Caco-2 (cell line): ENCODE measurements at regions of chr6 and their contacts with region 1.

Region 1: GRCh38 chr6:75183099-75183541 is 22.7 kb downstream of the COL12A1 start:
- DNase-seq: peak; percentile 81
- H3K4me3 ChIP-seq: no peak overlapping the region
- H3K4me3 Mint-ChIP-seq: peak overlapping the region; percentile 66
- H3K27ac Mint-ChIP-seq: peak overlapping the region; percentile 80
- H3K4me1 ChIP-seq: peaks cover 32% of the 10 kb centered on the region
- H3K4me1 Mint-ChIP-seq: peaks cover 31% of the 10 kb centered on the region
- H3K27me3 ChIP-seq: no peaks in the 10 kb centered on the region
- H3K27me3 Mint-ChIP-seq: no peaks in the 10 kb centered on the region
- CTCF ChIP-seq: no peak

Region 2: GRCh38 chr6:74971633-74972032 is 211.5 kb before region 1 on chr6:
- CTCF ChIA-PET with region 1: no interaction called
- POLR2A ChIA-PET with region 1: no interaction called
- intact Hi-C with region 1: loop called (anchors 2 kb)
- DNase-seq: no peak
- H3K4me3 ChIP-seq: no peak overlapping the region
- H3K4me3 Mint-ChIP-seq: no peak overlapping the region
- H3K27ac Mint-ChIP-seq: no peak overlapping the region
- H3K4me1 ChIP-seq: peaks cover 36% of the 10 kb centered on the region
- H3K4me1 Mint-ChIP-seq: peaks cover 17% of the 10 kb centered on the region
- H3K27me3 ChIP-seq: no peaks in the 10 kb centered on the region
- H3K27me3 Mint-ChIP-seq: no peaks in the 10 kb centered on the region
- CTCF ChIP-seq: no peak

Region 3: GRCh38 chr6:75052491-75052890 is 130.6 kb before region 1 on chr6:
- CTCF ChIA-PET with region 1: no interaction called
- POLR2A ChIA-PET with region 1: no interaction called
- intact Hi-C with region 1: no loop called
- DNase-seq: no peak
- H3K4me3 ChIP-seq: no peak overlapping the region
- H3K4me3 Mint-ChIP-seq: no peak overlapping the region
- H3K27ac Mint-ChIP-seq: no peak overlapping the region
- H3K4me1 ChIP-seq: no peaks in the 10 kb centered on the region
- H3K4me1 Mint-ChIP-seq: no peaks in the 10 kb centered on the region
- H3K27me3 ChIP-seq: no peaks in the 10 kb centered on the region
- H3K27me3 Mint-ChIP-seq: no peaks in the 10 kb centered on the region
- CTCF ChIP-seq: no peak

Region 4: GRCh38 chr6:75101896-75102295 is 81.2 kb before region 1 on chr6:
- CTCF ChIA-PET with region 1: no interaction called
- POLR2A ChIA-PET with region 1: no interaction called
- intact Hi-C with region 1: loop called (anchors 1 kb)
- DNase-seq: no peak
- H3K4me3 ChIP-seq: no peak overlapping the region
- H3K4me3 Mint-ChIP-seq: no peak overlapping the region
- H3K27ac Mint-ChIP-seq: no peak overlapping the region
- H3K4me1 ChIP-seq: peaks cover 24% of the 10 kb centered on the region
- H3K4me1 Mint-ChIP-seq: peaks cover 31% of the 10 kb centered on the region
- H3K27me3 ChIP-seq: no peaks in the 10 kb centered on the region
- H3K27me3 Mint-ChIP-seq: no peaks in the 10 kb centered on the region
- CTCF ChIP-seq: no peak

Region 5: DNA sequence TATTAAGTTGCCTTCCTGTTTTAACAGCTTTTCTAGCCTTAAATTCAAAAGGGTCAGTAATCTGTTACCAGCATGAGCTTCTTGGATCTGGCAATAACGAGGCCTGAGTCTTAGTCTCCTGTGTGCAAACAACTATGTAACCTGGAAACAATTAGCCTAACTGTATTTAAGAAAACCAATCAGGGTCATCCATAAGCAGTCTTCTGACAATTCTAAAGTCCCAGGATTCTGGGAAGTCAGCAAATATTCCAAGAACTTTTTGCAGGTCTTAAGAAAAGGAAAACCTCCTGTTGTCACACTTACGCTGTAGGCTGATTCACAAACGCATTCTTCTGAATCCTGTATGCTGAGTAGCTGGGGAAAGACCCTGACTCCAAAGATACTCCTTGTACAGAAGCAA is 67.6 kb before region 1 on chr6:
- CTCF ChIA-PET with region 1: no interaction called
- POLR2A ChIA-PET with region 1: no interaction called
- intact Hi-C with region 1: loop called (anchors 5 kb)
- DNase-seq: no peak
- H3K4me3 ChIP-seq: no peak overlapping the region
- H3K4me3 Mint-ChIP-seq: no peak overlapping the region
- H3K27ac Mint-ChIP-seq: no peak overlapping the region
- H3K4me1 ChIP-seq: peaks cover 24% of the 10 kb centered on the region
- H3K4me1 Mint-ChIP-seq: peaks cover 35% of the 10 kb centered on the region
- H3K27me3 ChIP-seq: no peaks in the 10 kb centered on the region
- H3K27me3 Mint-ChIP-seq: no peaks in the 10 kb centered on the region
- CTCF ChIP-seq: no peak

Region 6: DNA sequence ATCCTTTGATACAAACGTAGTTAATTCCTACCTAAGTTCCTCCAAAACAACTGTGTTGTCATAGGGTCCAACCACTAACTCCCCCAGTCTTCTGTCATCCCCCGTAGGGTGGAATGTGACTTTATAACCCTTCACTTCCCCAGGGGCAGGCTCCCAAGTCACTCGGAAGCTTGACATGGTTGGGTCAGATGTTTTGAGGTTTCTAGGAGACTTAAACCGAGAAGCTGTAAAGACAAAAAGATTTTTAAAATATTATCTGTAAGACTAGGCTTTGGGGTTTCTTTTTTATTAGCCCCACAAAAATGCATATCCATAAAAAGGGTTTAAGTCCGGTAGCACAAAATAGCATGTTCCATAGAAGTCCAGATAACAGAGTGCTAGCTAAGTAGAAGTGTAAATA is 27.5 kb before region 1 on chr6:
- CTCF ChIA-PET with region 1: no interaction called
- POLR2A ChIA-PET with region 1: no interaction called
- intact Hi-C with region 1: loop called (anchors 2 kb)
- DNase-seq: no peak
- H3K4me3 ChIP-seq: no peak overlapping the region
- H3K4me3 Mint-ChIP-seq: no peak overlapping the region
- H3K27ac Mint-ChIP-seq: peak overlapping the region; percentile 42
- H3K4me1 ChIP-seq: peaks cover 21% of the 10 kb centered on the region
- H3K4me1 Mint-ChIP-seq: peaks cover 17% of the 10 kb centered on the region
- H3K27me3 ChIP-seq: no peaks in the 10 kb centered on the region
- H3K27me3 Mint-ChIP-seq: no peaks in the 10 kb centered on the region
- CTCF ChIP-seq: no peak